Mammary epithelial cell (primary cell): ENCODE measurements at regions of chr3 and their contacts with region 1.

Region 1: GRCh38 chr3:13229273-13229949 is 156.2 kb upstream of the IQSEC1 start:
- DNase-seq: peak; percentile 61
- H3K4me3 ChIP-seq: no peak overlapping the region
- H3K27ac ChIP-seq: no peak overlapping the region
- H3K4me1 ChIP-seq: no peaks in the 10 kb centered on the region
- H3K27me3 ChIP-seq: no peaks in the 10 kb centered on the region
- CTCF ChIP-seq: peak; percentile 63 to 78

Region 2: DNA sequence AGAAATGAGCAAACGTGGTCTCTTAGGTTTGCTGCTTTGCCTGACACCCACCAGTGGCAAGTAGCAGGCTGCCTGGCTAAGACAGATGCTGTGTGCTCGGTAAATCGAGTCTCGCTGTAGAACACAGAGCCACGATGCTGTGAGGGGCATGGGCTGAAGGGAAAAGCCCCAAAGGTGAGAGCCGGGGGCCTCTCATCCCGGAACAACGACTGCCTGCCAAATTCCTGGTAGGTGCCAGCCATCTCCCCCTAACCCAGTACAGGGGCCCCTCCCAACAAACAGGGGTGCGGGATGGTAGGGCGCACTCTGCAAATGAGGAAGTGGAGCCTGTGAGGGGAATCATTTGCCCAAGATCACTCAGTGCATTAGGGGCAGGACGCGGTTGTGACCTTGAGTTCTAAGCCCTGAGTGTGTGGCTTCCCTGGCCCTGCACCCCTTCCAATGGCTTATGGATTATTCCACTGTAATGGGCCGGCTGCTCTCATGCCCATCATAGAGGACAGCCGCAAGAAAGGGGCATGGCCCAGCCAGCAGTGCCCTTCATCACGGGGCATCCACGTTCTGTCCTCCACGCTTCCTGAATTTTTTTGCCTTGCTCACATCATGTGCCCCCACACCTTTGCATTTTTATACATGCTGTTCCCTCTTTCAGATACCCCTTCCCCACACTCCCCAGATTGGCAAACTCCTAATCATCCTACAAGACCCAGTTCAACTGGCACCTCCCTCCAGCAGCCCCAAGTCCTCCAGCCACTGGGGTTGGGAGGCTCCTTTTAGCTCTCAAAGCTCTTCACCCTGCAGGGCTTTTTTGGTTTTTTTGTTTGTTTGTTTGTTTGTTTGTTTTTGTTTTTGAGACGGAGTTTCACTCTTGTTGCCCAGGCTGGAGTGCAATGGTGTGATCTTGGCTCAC is 65.3 kb after region 1 on chr3:
- CTCF ChIA-PET with region 1: no interaction called
- dilution Hi-C with region 1: loop called (anchors 5 kb)
- in situ Hi-C with region 1: no loop called
- intact Hi-C with region 1: no loop called
- DNase-seq: no peak
- H3K4me3 ChIP-seq: no peak overlapping the region
- H3K27ac ChIP-seq: no peak overlapping the region
- H3K4me1 ChIP-seq: no peaks in the 10 kb centered on the region
- H3K27me3 ChIP-seq: no peaks in the 10 kb centered on the region
- CTCF ChIP-seq: no peak

Region 3: DNA sequence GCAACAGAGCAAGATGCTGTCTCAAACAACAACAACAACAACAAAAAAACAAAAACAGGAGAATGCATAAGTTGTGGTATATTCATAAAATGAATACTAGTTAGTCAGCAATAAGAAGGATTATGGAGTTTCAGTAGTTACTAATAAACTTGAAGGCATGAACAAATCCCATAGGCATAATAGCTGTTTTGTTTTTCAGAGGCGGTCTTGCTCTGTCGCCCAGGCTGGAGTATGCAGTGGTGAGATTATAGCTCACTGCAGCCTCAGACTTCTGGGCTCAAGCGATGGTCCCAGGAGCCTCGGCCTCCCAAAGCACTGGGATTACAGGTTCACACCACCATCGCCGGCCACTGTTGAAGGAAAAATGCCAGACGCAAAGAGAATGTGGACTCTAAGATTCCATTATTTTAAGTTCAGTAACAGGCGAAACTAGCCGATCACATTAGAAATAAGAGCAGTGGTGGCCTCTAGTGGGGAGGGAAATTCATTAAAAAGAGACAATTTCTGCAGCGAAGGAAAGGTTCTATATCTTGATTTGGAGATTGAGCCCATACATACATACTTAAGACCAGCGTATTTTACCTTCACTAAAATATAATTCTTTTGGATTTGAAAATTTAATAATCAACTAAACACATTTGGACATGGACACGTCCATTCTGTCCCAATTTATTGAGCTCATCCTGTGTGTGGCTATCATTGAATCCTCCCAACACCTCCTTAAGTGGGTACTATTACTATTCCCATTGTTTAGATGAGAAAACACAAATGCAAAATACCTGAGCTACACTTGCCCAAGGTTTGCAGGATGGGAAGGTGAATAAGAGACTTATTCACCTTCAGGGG is 223.3 kb after region 1 on chr3:
- CTCF ChIA-PET with region 1: no interaction called
- dilution Hi-C with region 1: no loop called
- in situ Hi-C with region 1: no loop called
- intact Hi-C with region 1: loop called (anchors 1 kb)
- DNase-seq: peak; percentile 38
- H3K4me3 ChIP-seq: no peak overlapping the region
- H3K27ac ChIP-seq: peak overlapping the region; percentile 72
- H3K4me1 ChIP-seq: peaks cover 10% of the 10 kb centered on the region
- H3K27me3 ChIP-seq: no peaks in the 10 kb centered on the region
- CTCF ChIP-seq: peak; percentile 63 to 70